ENCODE measurements at regions of chr18 and their contacts with region 1.

Region 1: DNA sequence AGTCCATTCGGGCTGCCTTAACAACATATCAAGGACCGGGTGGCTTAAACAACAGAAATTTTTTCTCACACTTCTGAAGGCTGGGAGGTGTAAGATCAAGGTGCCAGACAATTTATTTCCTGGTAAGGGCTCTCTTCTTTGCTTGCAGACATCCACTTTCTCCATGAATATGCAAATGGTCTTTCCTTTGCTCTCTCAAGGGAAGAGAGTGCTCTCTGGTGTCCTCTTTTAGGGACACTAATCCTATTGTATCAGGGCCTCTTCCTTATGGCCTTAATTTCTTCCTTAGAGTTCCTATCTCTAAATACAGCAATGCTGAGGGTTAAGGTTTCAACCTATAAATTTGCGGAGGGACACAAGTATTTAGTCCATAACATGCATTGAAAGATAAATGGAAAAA is 770.8 kb downstream of the DSC3 start:
- DNase-seq: peak; percentile 0
- H3K4me3 ChIP-seq: no peak overlapping the region
- H3K27ac ChIP-seq: no peak overlapping the region
- H3K4me1 ChIP-seq: no peaks in the 10 kb centered on the region
- H3K27me3 ChIP-seq: no peaks in the 10 kb centered on the region
- CTCF ChIP-seq: peak in 1 of 2 donors; percentile 39

Region 2: GRCh38 chr18:29892960-29893558 is 378.7 kb before region 1 on chr18:
- CTCF ChIA-PET with region 1: no interaction called
- dilution Hi-C with region 1: no loop called
- in situ Hi-C with region 1: loop called in 1 of 2 experiments (anchors 25 kb)
- intact Hi-C with region 1: loop called (anchors 5 kb)
- DNase-seq: no peak
- H3K4me3 ChIP-seq: no peak overlapping the region
- H3K27ac ChIP-seq: no peak overlapping the region
- H3K4me1 ChIP-seq: no peaks in the 10 kb centered on the region
- H3K27me3 ChIP-seq: no peaks in the 10 kb centered on the region
- CTCF ChIP-seq: peak; percentile 40 to 54

Region 3: DNA sequence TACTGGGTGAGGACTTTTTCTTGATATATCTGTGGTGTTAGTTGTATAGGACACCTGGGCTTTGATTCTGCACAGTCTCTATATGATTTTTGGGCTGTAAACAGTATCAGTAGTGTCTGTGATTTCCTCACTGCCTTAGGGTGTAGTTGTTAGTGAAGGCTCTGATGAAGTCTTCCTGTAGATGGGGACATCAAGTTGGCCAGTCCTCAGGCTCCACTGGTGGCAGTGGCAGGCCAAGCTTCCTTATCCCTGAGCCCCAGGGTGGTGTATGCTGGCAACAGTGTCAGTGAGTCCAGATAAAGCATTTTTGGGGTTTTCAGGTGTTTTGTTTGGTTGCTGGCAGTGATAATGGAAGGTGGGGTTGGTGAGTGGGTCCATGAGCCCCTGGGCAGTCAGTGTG is 190.6 kb before region 1 on chr18:
- CTCF ChIA-PET with region 1: no interaction called
- dilution Hi-C with region 1: no loop called
- in situ Hi-C with region 1: loop called in 1 of 2 experiments (anchors 10 kb)
- intact Hi-C with region 1: loop called (anchors 1 kb)
- DNase-seq: no peak
- H3K4me3 ChIP-seq: no peak overlapping the region
- H3K27ac ChIP-seq: no peak overlapping the region
- H3K4me1 ChIP-seq: no peaks in the 10 kb centered on the region
- H3K27me3 ChIP-seq: no peaks in the 10 kb centered on the region
- CTCF ChIP-seq: no peak

Region 4: DNA sequence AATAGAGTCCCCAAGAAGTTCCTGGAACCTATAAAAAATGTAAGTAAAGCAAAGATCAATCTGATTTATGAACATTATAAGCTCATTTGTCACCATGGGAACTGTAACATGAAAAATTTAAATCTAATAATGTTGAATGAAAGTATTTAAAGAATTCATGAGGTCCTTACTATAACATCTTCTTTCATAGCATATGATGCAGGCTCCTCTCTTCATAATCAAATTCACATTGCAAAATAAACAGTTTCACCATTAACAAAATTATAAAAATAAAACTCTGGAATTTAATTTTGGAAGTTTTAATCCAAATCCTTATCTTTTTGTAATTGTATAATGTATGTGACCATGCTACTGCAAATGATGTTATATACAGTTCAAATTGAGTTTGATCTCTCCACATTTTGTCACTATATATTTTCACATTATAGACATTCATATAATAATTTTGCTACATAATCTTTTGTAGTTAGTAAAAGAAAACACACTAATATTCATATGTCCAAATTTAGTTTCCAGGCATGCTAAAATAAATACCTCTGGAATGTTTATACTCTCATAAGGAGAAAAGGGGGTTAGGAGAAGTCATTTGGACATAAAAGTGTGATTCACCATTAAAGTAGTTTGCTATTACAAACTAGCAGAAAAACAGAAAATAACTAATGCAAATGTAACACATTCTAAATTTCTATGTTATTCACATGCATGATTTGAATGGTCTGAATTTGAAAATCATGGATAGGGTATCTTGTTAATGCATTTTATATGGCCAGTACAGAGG is 183.3 kb before region 1 on chr18:
- CTCF ChIA-PET with region 1: no interaction called
- dilution Hi-C with region 1: no loop called
- in situ Hi-C with region 1: loop called in 1 of 2 experiments (anchors 10 kb)
- intact Hi-C with region 1: no loop called
- DNase-seq: no peak
- H3K4me3 ChIP-seq: no peak overlapping the region
- H3K27ac ChIP-seq: no peak overlapping the region
- H3K4me1 ChIP-seq: no peaks in the 10 kb centered on the region
- H3K27me3 ChIP-seq: no peaks in the 10 kb centered on the region
- CTCF ChIP-seq: no peak

Region 5: DNA sequence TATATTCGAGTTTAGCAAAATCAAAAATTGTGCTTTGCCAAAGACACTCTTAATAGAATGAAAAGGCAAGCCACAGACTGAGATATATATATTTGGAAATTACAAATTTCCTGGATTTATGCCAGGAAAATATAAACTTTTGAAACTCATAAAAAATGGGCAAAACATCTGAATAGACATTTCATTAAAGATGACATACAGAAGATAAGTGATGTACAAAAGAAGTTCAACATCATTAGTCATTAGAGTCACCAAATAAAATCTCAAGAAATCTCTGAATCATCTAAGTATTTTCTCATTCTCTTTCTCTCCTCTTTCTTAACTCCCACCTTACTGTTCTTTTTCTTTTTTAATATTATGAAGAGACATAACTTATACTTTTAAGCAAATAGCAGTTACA is 150.3 kb before region 1 on chr18:
- CTCF ChIA-PET with region 1: no interaction called
- dilution Hi-C with region 1: no loop called
- in situ Hi-C with region 1: no loop called
- intact Hi-C with region 1: no loop called
- DNase-seq: no peak
- H3K4me3 ChIP-seq: no peak overlapping the region
- H3K27ac ChIP-seq: no peak overlapping the region
- H3K4me1 ChIP-seq: no peaks in the 10 kb centered on the region
- H3K27me3 ChIP-seq: no peaks in the 10 kb centered on the region
- CTCF ChIP-seq: no peak